ENCODE measurements at regions of chr12 and their contacts with region 1.

Region 1: GRCh38 chr12:32062881-32063280 is 43.8 kb upstream of the BICD1 start:
- DNase-seq: no peak
- H3K4me3 ChIP-seq: no peak overlapping the region
- H3K4me3 Mint-ChIP-seq: no peak overlapping the region
- H3K27ac ChIP-seq: no peak overlapping the region
- H3K27ac Mint-ChIP-seq: peak overlapping the region in 2 of 7 donors; percentile 29 to 38
- H3K4me1 ChIP-seq: no peaks in the 10 kb centered on the region
- H3K4me1 Mint-ChIP-seq: peaks cover 5 to 12% (median 8%) of the 10 kb centered on the region in 4 donors
- H3K27me3 ChIP-seq: no peaks in the 10 kb centered on the region
- H3K27me3 Mint-ChIP-seq: no peaks in the 10 kb centered on the region

Region 2: DNA sequence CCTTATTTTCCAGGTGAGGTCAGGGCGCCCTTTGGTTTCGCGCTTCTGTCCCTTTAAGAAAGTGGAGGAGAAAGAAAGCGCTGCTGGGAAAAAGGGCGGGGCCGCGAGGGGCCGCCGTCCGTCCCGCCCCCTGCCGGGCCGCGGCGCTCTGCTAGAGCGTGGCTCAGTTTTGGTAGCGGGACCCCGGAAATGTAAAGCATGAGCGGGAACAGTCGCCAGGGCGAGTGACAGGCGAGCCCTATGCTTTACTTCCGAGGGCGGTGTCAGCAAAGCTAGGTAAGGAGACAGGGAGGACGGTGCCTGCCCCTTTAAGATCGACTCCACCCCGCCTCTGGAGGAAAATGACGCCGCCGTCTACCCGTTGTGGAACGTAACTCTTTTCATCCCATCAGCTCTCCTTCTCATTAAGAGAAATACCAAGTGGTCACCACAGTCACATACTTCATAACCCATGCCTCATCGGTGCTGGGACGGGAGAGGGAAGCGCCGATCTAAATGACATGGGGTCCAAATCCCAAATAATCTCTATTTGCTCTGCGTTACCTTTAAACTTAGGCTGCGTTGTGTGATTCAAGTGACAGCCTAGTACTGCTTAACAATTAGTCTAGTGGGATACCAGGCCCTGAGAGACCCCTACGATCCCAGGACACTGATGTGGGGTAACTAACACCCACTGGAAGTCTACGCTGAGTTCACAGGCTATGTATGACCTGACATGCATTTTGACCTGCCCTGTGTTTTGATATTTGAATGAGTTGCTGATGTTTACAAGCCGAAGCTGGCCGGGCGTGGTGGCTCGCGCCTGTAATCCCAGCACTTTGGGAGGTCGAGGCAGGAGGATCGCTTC is 403.6 kb before region 1 on chr12 and contains the start of gene ETFBKMT:
- CTCF ChIA-PET with region 1: interaction called, 13 read pairs
- POLR2A ChIA-PET with region 1: no interaction called
- intact Hi-C with region 1: no loop called
- DNase-seq: peak; percentile 91 to 97 (median 94)
- H3K4me3 ChIP-seq: peak within 1 kb of the TSS; percentile 86 to 89
- H3K4me3 Mint-ChIP-seq: peak within 1 kb of the TSS; percentile 92 to 99 (median 94)
- H3K27ac ChIP-seq: peak within 1 kb of the TSS; percentile 86
- H3K27ac Mint-ChIP-seq: peak within 1 kb of the TSS; percentile 91 to 99 (median 98)
- H3K4me1 ChIP-seq: peaks cover 17% of the 10 kb centered on the region
- H3K4me1 Mint-ChIP-seq: peaks cover 8 to 21% (median 14%) of the 10 kb centered on the region in 4 donors
- H3K27me3 ChIP-seq: no peaks in the 10 kb centered on the region
- H3K27me3 Mint-ChIP-seq: no peaks in the 10 kb centered on the region
- total RNA-seq, gene ETFBKMT: 1.5 to 1.8 TPM

Region 3: GRCh38 chr12:31966558-31967205 is 96.2 kb before region 1 on chr12:
- CTCF ChIA-PET with region 1: no interaction called
- POLR2A ChIA-PET with region 1: interaction called, 4 read pairs
- intact Hi-C with region 1: loop called (anchors 5 kb)
- DNase-seq: no peak
- H3K4me3 ChIP-seq: peak overlapping the region; percentile 34 to 39
- H3K4me3 Mint-ChIP-seq: peak overlapping the region; percentile 93 to 98 (median 96)
- H3K27ac ChIP-seq: peak overlapping the region; percentile 35
- H3K27ac Mint-ChIP-seq: peak overlapping the region; percentile 85 to 95 (median 94)
- H3K4me1 ChIP-seq: peaks cover 94% of the 10 kb centered on the region
- H3K4me1 Mint-ChIP-seq: peaks cover 60 to 95% (median 73%) of the 10 kb centered on the region in 4 donors
- H3K27me3 ChIP-seq: no peaks in the 10 kb centered on the region
- H3K27me3 Mint-ChIP-seq: no peaks in the 10 kb centered on the region

Region 4: DNA sequence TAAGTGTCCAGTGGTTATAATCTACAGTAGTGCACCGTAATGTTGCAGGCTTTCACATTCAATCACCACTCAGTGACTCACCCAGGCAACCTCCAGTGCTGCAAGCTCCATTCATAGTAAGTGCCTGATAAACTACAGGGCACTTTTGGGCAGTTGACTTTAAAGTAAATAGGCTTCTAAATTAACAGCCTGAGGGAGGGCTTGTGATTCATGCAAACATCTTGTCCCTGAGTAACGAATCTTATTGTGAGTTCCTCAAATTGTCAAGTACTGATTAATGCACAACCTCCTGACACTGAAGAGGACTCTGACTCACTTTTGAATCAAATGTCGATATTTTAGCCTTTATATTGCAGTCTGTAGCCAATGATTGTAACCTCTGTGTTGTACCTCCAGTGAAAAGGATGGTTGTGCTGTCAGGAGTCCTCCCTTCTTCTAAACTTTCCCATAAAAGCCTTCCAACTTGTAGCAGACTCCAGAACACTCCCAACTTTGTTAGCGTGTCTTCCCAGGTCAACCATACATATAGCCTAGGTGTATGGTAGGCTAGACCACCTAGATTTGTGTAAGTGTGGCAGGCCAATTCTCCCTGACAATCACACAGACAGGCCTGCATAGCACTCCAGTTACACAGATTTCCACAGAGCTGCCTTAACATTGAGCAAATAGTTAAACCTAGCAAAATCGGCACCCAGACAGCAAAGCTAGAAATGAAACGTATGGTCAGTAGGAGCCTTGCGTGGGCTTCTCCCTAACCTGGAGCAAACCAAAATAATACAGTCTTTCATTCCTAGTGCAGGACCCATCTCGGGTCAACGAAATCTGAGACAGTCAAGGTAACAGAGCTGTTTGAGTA is 11.1 kb before region 1 on chr12:
- CTCF ChIA-PET with region 1: interaction called, 12 read pairs
- POLR2A ChIA-PET with region 1: no interaction called
- intact Hi-C with region 1: no loop called
- DNase-seq: no peak
- H3K4me3 ChIP-seq: no peak overlapping the region
- H3K4me3 Mint-ChIP-seq: no peak overlapping the region
- H3K27ac ChIP-seq: no peak overlapping the region
- H3K27ac Mint-ChIP-seq: peak overlapping the region in 1 of 7 donors; percentile 85
- H3K4me1 ChIP-seq: no peaks in the 10 kb centered on the region
- H3K4me1 Mint-ChIP-seq: peaks cover 0 to 4% (median 1%) of the 10 kb centered on the region in 4 donors
- H3K27me3 ChIP-seq: no peaks in the 10 kb centered on the region
- H3K27me3 Mint-ChIP-seq: no peaks in the 10 kb centered on the region

Region 5: GRCh38 chr12:32302218-32303173 is 239.6 kb after region 1 on chr12:
- CTCF ChIA-PET with region 1: interaction called, 15 read pairs
- POLR2A ChIA-PET with region 1: interaction called, 3 read pairs
- intact Hi-C with region 1: loop called (anchors 1 kb)
- DNase-seq: peak in 4 of 5 donors; percentile 6 to 18 (median 8)
- H3K4me3 ChIP-seq: no peak overlapping the region
- H3K4me3 Mint-ChIP-seq: no peak overlapping the region
- H3K27ac ChIP-seq: no peak overlapping the region
- H3K27ac Mint-ChIP-seq: peak overlapping the region in 2 of 7 donors; percentile 20 to 29
- H3K4me1 ChIP-seq: no peaks in the 10 kb centered on the region
- H3K4me1 Mint-ChIP-seq: peaks cover 0 to 4% (median under 1%) of the 10 kb centered on the region in 4 donors
- H3K27me3 ChIP-seq: no peaks in the 10 kb centered on the region
- H3K27me3 Mint-ChIP-seq: no peaks in the 10 kb centered on the region

Region 6: DNA sequence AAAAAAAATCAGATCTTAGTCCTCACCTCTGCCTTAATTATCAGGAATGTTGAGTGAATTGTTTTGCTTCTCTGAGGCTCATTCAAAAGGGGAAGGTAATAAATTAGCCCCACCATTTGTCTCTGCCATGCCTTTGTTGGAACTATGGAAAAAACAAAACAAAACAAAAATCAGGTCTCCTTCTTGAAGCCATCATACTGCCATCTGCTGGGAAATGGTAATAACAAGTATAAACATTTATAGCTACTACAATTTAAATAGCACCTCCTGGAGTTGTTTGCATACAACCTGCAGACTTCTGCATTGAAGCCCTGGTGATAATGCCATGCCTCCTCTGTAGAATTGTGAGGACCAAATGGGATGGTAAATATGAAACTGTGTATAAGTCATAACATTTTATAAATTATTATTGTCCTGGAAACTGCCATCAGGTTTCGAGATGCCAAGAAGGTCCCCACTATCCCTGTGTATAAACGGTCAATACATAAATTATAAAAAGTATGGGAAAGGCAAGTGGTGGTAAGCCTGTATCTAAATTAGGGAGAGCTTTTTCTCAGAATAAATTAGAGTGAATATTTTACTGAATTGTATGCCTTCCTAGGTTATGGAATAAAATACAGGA is 249.3 kb after region 1 on chr12:
- CTCF ChIA-PET with region 1: interaction called, 15 read pairs
- POLR2A ChIA-PET with region 1: no interaction called
- intact Hi-C with region 1: loop called (anchors 2 kb)
- DNase-seq: peak in 4 of 5 donors; percentile 31 to 52 (median 38)
- H3K4me3 ChIP-seq: no peak overlapping the region
- H3K4me3 Mint-ChIP-seq: peak overlapping the region in 2 of 8 donors; percentile 14 to 65
- H3K27ac ChIP-seq: no peak overlapping the region
- H3K27ac Mint-ChIP-seq: peak overlapping the region in 1 of 7 donors; percentile 87
- H3K4me1 ChIP-seq: no peaks in the 10 kb centered on the region
- H3K4me1 Mint-ChIP-seq: peaks cover 3 to 9% (median 4%) of the 10 kb centered on the region in 4 donors
- H3K27me3 ChIP-seq: no peaks in the 10 kb centered on the region
- H3K27me3 Mint-ChIP-seq: no peaks in the 10 kb centered on the region

Measured in CD4-positive, alpha-beta memory T cell (primary cell).